SK-N-SH (cell line): ENCODE measurements at regions of chr11 and their contacts with region 1.

Region 1: DNA sequence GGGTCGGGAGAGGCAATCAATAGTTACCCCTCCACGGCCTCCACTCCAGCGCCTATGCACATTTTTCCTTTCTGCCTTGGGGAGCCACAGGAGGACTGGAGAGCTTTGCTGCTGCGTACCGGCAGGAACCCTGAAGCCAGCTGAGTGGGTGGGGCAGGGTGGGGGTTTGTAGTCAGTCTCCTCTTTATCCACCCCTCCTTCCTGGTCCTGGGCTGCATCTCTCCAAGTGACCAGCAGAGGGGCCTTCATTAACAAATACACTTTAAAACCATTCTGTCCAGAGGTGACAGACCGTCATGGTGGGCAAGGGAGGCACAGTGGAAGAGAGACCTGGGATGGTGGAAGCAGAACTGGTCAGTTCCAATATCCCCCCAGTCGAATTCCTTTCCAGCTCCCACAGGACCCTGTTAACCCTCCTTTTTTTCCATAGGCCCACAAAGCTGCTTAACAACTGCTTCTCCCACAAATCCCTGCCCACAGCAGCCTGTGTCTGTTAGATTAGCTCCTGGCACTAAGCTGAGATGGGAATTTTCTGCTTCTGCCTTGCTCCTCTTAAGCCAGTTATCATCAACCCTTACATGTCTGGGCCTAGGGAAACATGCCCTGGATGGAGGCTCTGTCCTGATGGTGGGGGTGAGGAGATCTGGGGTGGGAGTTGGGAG is 3.9 kb upstream of the ABCG4 start:
- DNase-seq: peak; percentile 93
- H3K4me3 ChIP-seq: no peak overlapping the region
- H3K27ac ChIP-seq: no peak overlapping the region
- H3K4me1 ChIP-seq: peaks cover 0 to 13% of the 10 kb centered on the region in 2 experiments; a peak in 1 of 4 replicates
- H3K27me3 ChIP-seq: no peaks in the 10 kb centered on the region; the same call in 1 of the 2 replicates
- CTCF ChIP-seq: peak; percentile 60
- EP300 ChIP-seq: no peak
- RAD21 ChIP-seq: peak; percentile 68

Region 2: GRCh38 chr11:118845369-118845768 is 299.6 kb before region 1 on chr11:
- CTCF ChIA-PET with region 1: no interaction called
- POLR2A ChIA-PET with region 1: no interaction called
- DNase-seq: no peak
- H3K4me3 ChIP-seq: no peak overlapping the region
- H3K27ac ChIP-seq: no peak overlapping the region
- H3K4me1 ChIP-seq: peaks cover 0 to 5% of the 10 kb centered on the region in 2 experiments; a peak in 1 of 4 replicates
- H3K27me3 ChIP-seq: no peaks in the 10 kb centered on the region
- CTCF ChIP-seq: no peak
- EP300 ChIP-seq: no peak
- RAD21 ChIP-seq: no peak

Region 3: GRCh38 chr11:119134389-119134978 is 10.5 kb before region 1 on chr11:
- CTCF ChIA-PET with region 1: interaction called, 35 read pairs
- POLR2A ChIA-PET with region 1: no interaction called
- DNase-seq: peak; percentile 48
- H3K4me3 ChIP-seq: no peak overlapping the region
- H3K27ac ChIP-seq: no peak overlapping the region
- H3K4me1 ChIP-seq: no peaks in the 10 kb centered on the region
- H3K27me3 ChIP-seq: no peaks in the 10 kb centered on the region
- CTCF ChIP-seq: peak; percentile 65
- EP300 ChIP-seq: no peak
- RAD21 ChIP-seq: no peak

Region 4: GRCh38 chr11:119189412-119189811 is 44.5 kb after region 1 on chr11:
- CTCF ChIA-PET with region 1: interaction called, 48 read pairs
- POLR2A ChIA-PET with region 1: no interaction called
- DNase-seq: peak; percentile 6
- H3K4me3 ChIP-seq: no peak overlapping the region
- H3K27ac ChIP-seq: no peak overlapping the region
- H3K4me1 ChIP-seq: peaks cover 0 to 9% of the 10 kb centered on the region in 2 experiments; a peak in 1 of 4 replicates
- H3K27me3 ChIP-seq: no peaks in the 10 kb centered on the region
- CTCF ChIP-seq: no peak
- EP300 ChIP-seq: no peak
- RAD21 ChIP-seq: no peak